ENCODE measurements at regions of chr11 and their contacts with region 1.

Region 1: GRCh38 chr11:67439321-67439883 is 1.9 kb upstream of the PTPRCAP start:
- DNase-seq: peak; percentile 64
- ATAC-seq: no peak
- H3K4me3 Mint-ChIP-seq: peak overlapping the region; percentile 87
- H3K27ac Mint-ChIP-seq: peak overlapping the region; percentile 86
- H3K4me1 Mint-ChIP-seq: peaks cover 49% of the 10 kb centered on the region
- H3K27me3 Mint-ChIP-seq: no peaks in the 10 kb centered on the region
- CTCF ChIP-seq: peak; percentile 20

Region 2: DNA sequence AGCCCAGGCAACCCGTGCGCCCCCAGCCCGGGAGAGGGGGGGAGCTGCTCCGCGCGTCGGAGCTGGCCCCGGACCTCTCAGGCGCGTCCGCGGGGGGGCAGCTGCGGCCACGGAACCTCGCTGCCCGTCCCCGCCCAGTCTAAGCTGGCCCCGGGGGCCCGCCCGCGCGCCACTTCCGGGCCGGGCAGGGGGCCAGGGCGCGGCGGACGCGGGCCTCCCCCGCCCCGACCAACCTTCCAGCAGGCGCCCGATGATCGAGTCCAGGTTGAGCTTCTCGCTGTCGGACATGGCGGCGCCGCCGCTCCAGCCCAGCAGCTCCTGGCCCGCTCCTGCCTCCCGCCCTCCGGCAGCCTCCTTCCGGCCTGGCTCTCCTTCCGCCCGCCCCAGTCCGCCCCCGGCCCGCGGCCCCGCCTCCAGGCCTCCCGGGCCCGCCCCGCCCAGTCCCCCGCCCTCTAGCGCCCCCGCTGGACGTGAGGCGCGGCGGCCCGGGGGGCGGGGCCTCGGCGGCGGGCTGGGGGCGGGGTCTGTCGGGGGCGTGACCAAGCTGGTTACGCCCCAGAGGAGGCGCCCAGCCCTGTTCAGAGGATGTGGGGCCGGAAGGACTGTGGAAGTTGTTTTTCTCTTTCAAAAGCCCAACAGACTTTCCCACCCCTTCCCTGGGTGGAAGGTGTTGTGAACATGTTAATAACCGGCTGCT is 37.8 kb before region 1 on chr11 and contains the start of gene PPP1CA:
- CTCF ChIA-PET with region 1: interaction called, 12 read pairs
- POLR2A ChIA-PET with region 1: interaction called, 130 read pairs
- intact Hi-C with region 1: no loop called
- DNase-seq: peak; percentile 91
- ATAC-seq: peak; percentile 73
- H3K4me3 Mint-ChIP-seq: peak within 1 kb of the TSS; percentile 87
- H3K27ac Mint-ChIP-seq: peak within 1 kb of the TSS; percentile 86
- H3K4me1 Mint-ChIP-seq: peaks cover 40% of the 10 kb centered on the region
- H3K27me3 Mint-ChIP-seq: no peaks in the 10 kb centered on the region
- CTCF ChIP-seq: peak; percentile 46
- total RNA-seq, gene PPP1CA: 249 to 258 TPM

Region 3: DNA sequence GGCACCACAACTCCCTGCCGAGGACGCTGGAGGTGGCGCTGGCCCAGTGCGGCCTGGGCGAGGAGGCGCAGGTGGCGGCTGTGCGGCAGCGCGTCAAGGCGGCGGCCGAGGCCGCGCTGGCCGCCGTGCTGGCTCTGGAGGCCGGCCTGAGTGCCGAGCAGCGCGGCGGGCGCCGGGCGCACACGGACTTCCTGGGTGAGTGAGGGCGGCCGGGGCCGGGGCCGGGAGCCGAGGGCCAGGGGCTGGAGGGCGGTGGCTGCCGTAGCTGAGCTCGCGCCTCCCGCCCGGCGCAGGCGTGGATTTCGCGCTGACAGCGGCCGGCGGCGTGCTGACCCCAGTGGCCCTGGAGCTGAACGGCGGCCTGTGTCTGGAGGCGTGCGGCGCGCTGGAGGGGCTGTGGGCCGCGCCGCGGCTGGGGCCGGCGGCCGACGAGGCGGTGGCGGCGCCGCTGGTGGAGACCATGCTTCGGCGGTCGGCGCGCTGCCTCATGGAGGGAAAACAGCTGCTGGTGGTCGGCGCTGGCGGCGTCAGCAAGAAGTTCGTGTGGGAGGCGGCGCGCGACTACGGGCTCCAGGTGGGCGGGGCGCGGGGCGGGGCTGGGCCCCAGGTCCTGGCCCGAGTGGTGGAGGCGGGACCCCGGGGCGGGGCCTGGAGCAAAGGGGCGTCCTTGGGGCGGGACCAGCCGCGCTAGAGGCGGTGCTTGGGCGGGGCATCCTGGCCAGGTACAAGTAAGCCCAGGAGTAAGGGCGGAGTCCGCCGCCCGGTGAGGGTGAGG is 18.6 kb before region 1 on chr11:
- CTCF ChIA-PET with region 1: interaction called, 4 read pairs
- POLR2A ChIA-PET with region 1: interaction called, 178 read pairs
- intact Hi-C with region 1: no loop called
- DNase-seq: peak; percentile 99
- ATAC-seq: peak; percentile 91
- H3K4me3 Mint-ChIP-seq: peak overlapping the region; percentile 82
- H3K27ac Mint-ChIP-seq: peak overlapping the region; percentile 84
- H3K4me1 Mint-ChIP-seq: peaks cover 48% of the 10 kb centered on the region
- H3K27me3 Mint-ChIP-seq: no peaks in the 10 kb centered on the region
- CTCF ChIP-seq: no peak

Region 4: GRCh38 chr11:67452141-67452952 is 12.9 kb after region 1 on chr11 and contains the start of gene GPR152:
- CTCF ChIA-PET with region 1: no interaction called
- POLR2A ChIA-PET with region 1: interaction called, 11 read pairs
- intact Hi-C with region 1: no loop called
- DNase-seq: no peak
- ATAC-seq: no peak
- H3K4me3 Mint-ChIP-seq: no peak within 1 kb of the TSS
- H3K27ac Mint-ChIP-seq: no peak within 1 kb of the TSS
- H3K4me1 Mint-ChIP-seq: peaks cover 17% of the 10 kb centered on the region
- H3K27me3 Mint-ChIP-seq: no peaks in the 10 kb centered on the region
- CTCF ChIP-seq: no peak
- total RNA-seq, gene GPR152: not detected

Region 5: DNA sequence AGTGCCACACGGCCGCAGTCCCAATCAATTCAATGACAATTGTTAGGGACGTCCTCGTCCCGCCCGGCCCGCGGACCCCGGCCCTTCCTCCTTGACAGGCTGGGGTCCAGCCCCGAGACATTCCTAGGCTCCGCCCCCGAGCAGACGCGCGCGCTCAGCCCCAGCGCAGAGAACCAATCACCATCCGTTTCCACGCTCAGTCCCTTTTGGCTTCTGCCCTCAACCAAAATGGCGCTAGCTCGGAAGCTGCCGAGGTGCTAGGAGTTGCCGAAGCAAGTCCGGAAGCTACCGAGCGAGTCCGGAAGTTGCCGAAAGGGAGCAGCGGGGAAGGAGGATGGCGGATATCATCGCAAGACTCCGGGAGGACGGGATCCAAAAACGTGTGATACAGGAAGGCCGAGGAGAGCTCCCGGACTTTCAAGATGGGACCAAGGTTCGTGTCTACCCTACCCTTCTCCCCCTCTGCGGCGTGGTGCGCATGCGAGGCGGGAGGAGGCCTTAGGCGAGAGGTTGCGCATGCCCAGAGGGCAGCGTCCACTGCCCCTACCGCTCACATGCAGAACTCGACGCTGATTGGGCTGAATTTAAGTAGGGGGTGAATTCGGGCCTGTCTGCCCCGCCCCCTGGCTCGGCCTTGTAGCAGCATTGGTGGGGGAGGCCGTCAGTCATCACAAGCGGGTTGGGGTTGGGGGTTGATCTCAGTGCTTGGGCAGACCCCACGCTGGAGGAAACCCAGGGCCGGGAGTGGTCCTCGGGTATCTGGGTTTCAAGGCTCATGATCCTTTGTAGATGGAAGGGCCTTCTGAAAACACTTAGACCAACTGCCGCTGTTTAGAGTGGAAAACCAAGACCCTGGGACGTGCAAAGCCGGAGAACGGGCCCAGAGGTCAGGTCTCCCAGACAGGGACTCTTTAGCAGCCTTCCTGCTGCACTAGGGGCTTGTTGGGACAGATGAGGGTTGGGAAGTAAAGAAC is 43.7 kb after region 1 on chr11 and contains the start of gene AIP:
- CTCF ChIA-PET with region 1: interaction called, 3 read pairs
- POLR2A ChIA-PET with region 1: interaction called, 53 read pairs
- intact Hi-C with region 1: loop called (anchors 5 kb)
- DNase-seq: peak; percentile 99
- ATAC-seq: peak; percentile 68
- H3K4me3 Mint-ChIP-seq: peak within 1 kb of the TSS; percentile 79
- H3K27ac Mint-ChIP-seq: peak within 1 kb of the TSS; percentile 97
- H3K4me1 Mint-ChIP-seq: peaks cover 31% of the 10 kb centered on the region
- H3K27me3 Mint-ChIP-seq: no peaks in the 10 kb centered on the region
- CTCF ChIP-seq: no peak
- total RNA-seq, gene AIP: 145 to 146 TPM

Region 6: DNA sequence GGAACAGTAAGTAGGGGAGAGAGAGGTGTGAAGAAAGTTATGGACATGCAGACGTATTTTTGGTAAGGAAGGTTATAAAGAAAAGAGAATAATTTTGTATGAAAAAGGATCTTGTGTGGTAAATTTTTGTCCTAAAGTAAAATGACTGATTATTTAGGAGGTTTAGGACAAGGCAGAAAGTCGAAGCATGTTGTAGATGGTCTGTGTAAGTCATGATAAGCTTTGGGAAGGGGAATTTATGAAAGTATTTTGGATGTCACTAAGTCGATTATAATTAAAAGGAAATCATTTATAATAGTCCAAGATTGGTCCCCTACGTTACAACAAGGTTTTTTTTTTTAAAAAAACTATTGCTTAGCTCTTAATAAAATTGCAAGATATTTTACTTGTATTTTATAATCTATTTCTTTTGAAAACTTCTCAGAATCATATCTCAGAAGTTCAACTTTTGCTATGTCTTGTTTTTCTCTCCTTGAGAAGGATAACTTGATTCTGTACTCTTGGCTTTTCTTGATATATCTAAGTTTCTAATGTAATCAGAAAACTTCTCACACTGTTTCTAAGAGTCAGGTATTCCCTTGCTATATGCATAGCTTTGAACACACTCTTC is 94.8 kb after region 1 on chr11:
- CTCF ChIA-PET with region 1: no interaction called
- POLR2A ChIA-PET with region 1: no interaction called
- intact Hi-C with region 1: no loop called
- DNase-seq: no peak
- ATAC-seq: no peak
- H3K4me3 Mint-ChIP-seq: no peak overlapping the region
- H3K27ac Mint-ChIP-seq: no peak overlapping the region
- H3K4me1 Mint-ChIP-seq: no peaks in the 10 kb centered on the region
- H3K27me3 Mint-ChIP-seq: no peaks in the 10 kb centered on the region
- CTCF ChIP-seq: no peak

Region 7: GRCh38 chr11:67648140-67649123 is 209.0 kb after region 1 on chr11:
- CTCF ChIA-PET with region 1: no interaction called
- POLR2A ChIA-PET with region 1: no interaction called
- intact Hi-C with region 1: no loop called
- DNase-seq: peak; percentile 81
- ATAC-seq: peak; percentile 86
- H3K4me3 Mint-ChIP-seq: no peak overlapping the region
- H3K27ac Mint-ChIP-seq: no peak overlapping the region
- H3K4me1 Mint-ChIP-seq: peaks cover 51% of the 10 kb centered on the region
- H3K27me3 Mint-ChIP-seq: no peaks in the 10 kb centered on the region
- CTCF ChIP-seq: peak; percentile 69

Measured in activated CD8-positive, alpha-beta T cell treated with anti-CD3 and anti-CD28 coated beads for 36 hours (primary cell).